GM12878 (cell line): ENCODE measurements at regions of chr11 and their contacts with region 1.

Region 1: GRCh38 chr11:64317957-64318693 is at the start of gene PRDX5:
- DNase-seq: peak; percentile 92
- ATAC-seq: peak; percentile 86
- H3K4me3 ChIP-seq: peak within 1 kb of the TSS; percentile 80
- H3K27ac ChIP-seq: peak within 1 kb of the TSS; percentile 99
- H3K4me1 ChIP-seq: peaks cover 9% of the 10 kb centered on the region
- H3K27me3 ChIP-seq: no peaks in the 10 kb centered on the region
- CTCF ChIP-seq: peak; percentile 41 to 91 (median 41); a peak in 5 of 6 replicates
- EP300 ChIP-seq: no peak
- POLR2A ChIP-seq: peak; percentile 86
- RAD21 ChIP-seq: peak; percentile 56; the same call in 1 of the 2 replicates
- polyA plus RNA-seq, gene PRDX5: 95.7 to 203 TPM

Region 2: GRCh38 chr11:64284048-64284961 is 33.8 kb before region 1 on chr11 and contains the start of gene BAD:
- CTCF ChIA-PET with region 1: interaction called, 5 read pairs
- POLR2A ChIA-PET with region 1: interaction called, 10 read pairs
- RAD21 ChIA-PET with region 1: interaction called, 6 read pairs
- SMC1A ChIA-PET with region 1: interaction called, 10 read pairs
- in situ Hi-C with region 1: no loop called
- intact Hi-C with region 1: no loop called
- DNase-seq: no peak
- ATAC-seq: peak; percentile 94
- H3K4me3 ChIP-seq: peak within 1 kb of the TSS; percentile 86
- H3K27ac ChIP-seq: peak within 1 kb of the TSS; percentile 91
- H3K4me1 ChIP-seq: peaks cover 7% of the 10 kb centered on the region
- H3K27me3 ChIP-seq: no peaks in the 10 kb centered on the region
- CTCF ChIP-seq: no peak
- EP300 ChIP-seq: no peak; a peak in 1 of 4 replicates
- POLR2A ChIP-seq: peak; percentile 78
- RAD21 ChIP-seq: no peak
- polyA plus RNA-seq, gene BAD: 1.5 to 7.4 TPM

Region 3: DNA sequence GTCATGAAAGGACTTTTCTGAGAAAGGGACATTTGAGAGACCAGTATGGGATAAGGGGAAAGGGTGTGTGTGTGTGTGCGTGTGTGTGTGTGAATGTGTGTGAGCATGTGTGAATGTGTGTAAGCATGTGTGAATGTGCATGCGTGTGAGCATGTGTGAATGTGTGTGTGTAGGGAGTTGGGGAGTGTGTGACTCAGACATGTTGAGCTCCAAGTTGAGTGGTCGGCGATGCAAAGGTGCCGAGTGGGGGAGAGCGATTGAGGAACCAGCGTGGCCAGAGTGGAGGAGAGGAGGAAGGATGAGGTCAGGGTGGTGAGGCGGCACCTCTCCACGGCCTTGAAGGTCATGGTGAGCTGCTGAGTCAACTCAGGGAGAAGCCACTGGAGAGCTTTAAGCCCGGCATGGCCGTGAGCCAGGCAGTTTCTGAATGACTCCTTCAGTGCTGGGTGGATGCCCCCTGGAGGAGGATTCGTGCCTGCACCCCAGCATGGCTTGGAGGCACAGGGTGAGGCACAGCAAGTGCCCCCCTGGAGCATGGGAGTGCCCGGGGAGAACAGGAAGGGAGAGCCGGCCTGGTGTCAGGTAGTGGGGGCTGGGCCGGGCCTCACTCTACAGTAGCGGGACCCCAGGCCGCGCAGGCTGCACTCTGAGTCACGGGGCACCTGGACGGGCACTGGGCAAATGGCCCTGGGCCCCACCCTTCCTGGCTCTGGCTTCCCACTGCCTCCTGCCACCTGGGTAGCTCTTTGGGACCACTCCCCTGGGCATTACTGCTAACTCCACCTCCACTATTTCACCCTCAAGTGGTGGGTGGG is 13.6 kb after region 1 on chr11:
- CTCF ChIA-PET with region 1: interaction called, 228 read pairs
- POLR2A ChIA-PET with region 1: interaction called, 27 read pairs
- RAD21 ChIA-PET with region 1: interaction called, 86 read pairs
- SMC1A ChIA-PET with region 1: interaction called, 71 read pairs
- in situ Hi-C with region 1: no loop called
- intact Hi-C with region 1: loop called (anchors 1 kb)
- DNase-seq: peak; percentile 80
- ATAC-seq: peak; percentile 80
- H3K4me3 ChIP-seq: no peak overlapping the region
- H3K27ac ChIP-seq: peak overlapping the region; percentile 52
- H3K4me1 ChIP-seq: peaks cover 21% of the 10 kb centered on the region
- H3K27me3 ChIP-seq: no peaks in the 10 kb centered on the region
- CTCF ChIP-seq: peak; percentile 78 to 86 (median 82)
- EP300 ChIP-seq: peak in 1 of 2 experiments; percentile 68; a peak in 1 of 4 replicates
- POLR2A ChIP-seq: peak; percentile 53; the same call in 1 of the 2 replicates
- RAD21 ChIP-seq: peak; percentile 53

Region 4: GRCh38 chr11:64341851-64342791 is 24.0 kb after region 1 on chr11:
- CTCF ChIA-PET with region 1: interaction called, 228 read pairs
- POLR2A ChIA-PET with region 1: interaction called, 37 read pairs
- RAD21 ChIA-PET with region 1: interaction called, 57 read pairs
- SMC1A ChIA-PET with region 1: interaction called, 28 read pairs
- in situ Hi-C with region 1: no loop called
- intact Hi-C with region 1: loop called (anchors 1 kb)
- DNase-seq: no peak
- ATAC-seq: peak; percentile 78
- H3K4me3 ChIP-seq: peak overlapping the region; percentile 45; the same call in 1 of the 2 replicates
- H3K27ac ChIP-seq: no peak overlapping the region
- H3K4me1 ChIP-seq: peaks cover 24% of the 10 kb centered on the region
- H3K27me3 ChIP-seq: no peaks in the 10 kb centered on the region
- CTCF ChIP-seq: peak; percentile 21 to 31 (median 29); a peak in 3 of 6 replicates
- EP300 ChIP-seq: no peak
- POLR2A ChIP-seq: peak; percentile 47; the same call in 1 of the 2 replicates
- RAD21 ChIP-seq: peak; percentile 23; the same call in 1 of the 2 replicates

Region 5: GRCh38 chr11:64347182-64347867 is 29.2 kb after region 1 on chr11:
- CTCF ChIA-PET with region 1: interaction called, 228 read pairs
- POLR2A ChIA-PET with region 1: interaction called, 17 read pairs
- RAD21 ChIA-PET with region 1: interaction called, 17 read pairs
- SMC1A ChIA-PET with region 1: interaction called, 28 read pairs
- in situ Hi-C with region 1: no loop called
- intact Hi-C with region 1: no loop called
- DNase-seq: no peak
- ATAC-seq: no peak
- H3K4me3 ChIP-seq: no peak overlapping the region
- H3K27ac ChIP-seq: no peak overlapping the region
- H3K4me1 ChIP-seq: peaks cover under 1% of the 10 kb centered on the region
- H3K27me3 ChIP-seq: no peaks in the 10 kb centered on the region
- CTCF ChIP-seq: no peak
- EP300 ChIP-seq: no peak
- POLR2A ChIP-seq: no peak
- RAD21 ChIP-seq: no peak

Region 6: GRCh38 chr11:64358907-64359711 is 41.0 kb after region 1 on chr11 and contains the start of gene RPS6KA4:
- CTCF ChIA-PET with region 1: interaction called, 143 read pairs
- POLR2A ChIA-PET with region 1: interaction called, 23 read pairs
- RAD21 ChIA-PET with region 1: interaction called, 176 read pairs
- SMC1A ChIA-PET with region 1: interaction called, 37 read pairs
- in situ Hi-C with region 1: no loop called
- intact Hi-C with region 1: loop called (anchors 5 kb)
- DNase-seq: no peak
- ATAC-seq: peak; percentile 85
- H3K4me3 ChIP-seq: peak within 1 kb of the TSS; percentile 69
- H3K27ac ChIP-seq: peak within 1 kb of the TSS; percentile 72
- H3K4me1 ChIP-seq: peaks cover 36% of the 10 kb centered on the region
- H3K27me3 ChIP-seq: no peaks in the 10 kb centered on the region
- CTCF ChIP-seq: no peak
- EP300 ChIP-seq: no peak
- POLR2A ChIP-seq: peak; percentile 82
- RAD21 ChIP-seq: no peak
- polyA plus RNA-seq, gene RPS6KA4: 0.34 to 0.73 TPM

Region 7: GRCh38 chr11:64750361-64751054 is 432.4 kb after region 1 on chr11:
- CTCF ChIA-PET with region 1: no interaction called
- POLR2A ChIA-PET with region 1: no interaction called
- RAD21 ChIA-PET with region 1: no interaction called
- SMC1A ChIA-PET with region 1: no interaction called
- in situ Hi-C with region 1: no loop called
- intact Hi-C with region 1: no loop called
- DNase-seq: no peak
- ATAC-seq: no peak
- H3K4me3 ChIP-seq: no peak overlapping the region
- H3K27ac ChIP-seq: no peak overlapping the region
- H3K4me1 ChIP-seq: peaks cover 3% of the 10 kb centered on the region
- H3K27me3 ChIP-seq: no peaks in the 10 kb centered on the region
- CTCF ChIP-seq: 0 out of 6 replicates have a peak, but pooled peaks of 2 of the 3 experiments have one; percentile 5 to 19
- EP300 ChIP-seq: no peak
- POLR2A ChIP-seq: no peak
- RAD21 ChIP-seq: no peak